HCT116 (cell line): ENCODE measurements at regions of chr18 and their contacts with region 1.

Region 1: DNA sequence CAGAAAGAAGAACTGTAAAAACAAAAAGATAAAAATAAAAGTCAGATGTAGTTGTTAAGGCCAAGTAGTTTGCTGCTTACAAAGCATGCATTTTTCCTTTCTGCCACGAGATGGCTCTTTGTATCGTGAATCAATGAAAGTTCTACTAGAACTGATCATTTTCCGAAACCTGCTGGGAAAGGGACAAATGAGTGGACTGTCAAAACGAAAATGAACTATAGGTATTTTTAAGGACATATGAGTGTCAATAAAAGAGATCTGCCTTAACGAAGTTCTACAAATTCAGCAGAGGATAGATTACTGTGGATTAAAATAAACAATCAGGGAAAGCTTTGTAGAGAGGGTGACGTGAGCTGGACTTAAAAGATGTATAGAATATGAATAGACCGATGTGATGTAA is 15.0 kb upstream of the ELOA2 start:
- DNase-seq: peak; percentile 54
- ATAC-seq: peak; percentile 71
- H3K4me3 ChIP-seq: no peak overlapping the region
- H3K27ac ChIP-seq: no peak overlapping the region
- H3K4me1 ChIP-seq: no peaks in the 10 kb centered on the region
- H3K27me3 ChIP-seq: peaks cover 56% of the 10 kb centered on the region; the same call in 1 of the 2 replicates
- CTCF ChIP-seq: peak; percentile 55 to 80 (median 63); a peak in 5 of 6 replicates
- POLR2A ChIP-seq: no peak
- RAD21 ChIP-seq: peak; percentile 78

Region 2: DNA sequence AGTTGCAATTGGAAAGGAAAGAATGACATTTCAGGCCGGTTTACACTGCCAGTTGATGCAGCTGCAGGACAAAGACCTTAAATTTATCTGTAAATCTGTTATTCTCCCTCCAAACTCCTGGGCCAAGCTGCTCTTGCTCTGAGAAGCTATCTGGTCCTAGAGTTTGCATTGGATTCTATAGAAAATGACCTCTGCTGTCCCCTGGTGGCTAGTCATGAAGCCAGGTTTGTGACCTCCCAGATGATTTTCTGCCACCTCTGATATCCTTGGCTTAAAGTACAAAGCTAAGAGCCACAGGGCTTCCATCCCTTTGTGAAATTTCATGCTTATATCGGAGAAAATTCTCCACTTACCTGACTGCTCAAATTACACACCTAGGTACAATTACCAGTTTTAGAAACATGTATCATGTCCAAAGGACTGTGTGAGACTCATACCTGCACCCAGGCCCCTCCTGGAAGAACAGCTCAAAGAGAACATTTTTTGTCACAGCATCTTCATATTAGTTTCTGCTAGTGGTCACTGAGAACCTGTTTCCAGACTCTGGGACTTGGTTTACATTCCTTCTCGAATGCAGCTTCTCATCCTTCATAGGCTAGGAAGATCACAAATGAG is 154.5 kb after region 1 on chr18:
- CTCF ChIA-PET with region 1: interaction called, 48 read pairs
- POLR2A ChIA-PET with region 1: no interaction called
- RAD21 ChIA-PET with region 1: interaction called in 1 of 2 experiments, 6 read pairs
- intact Hi-C with region 1: loop called (anchors 1 kb)
- DNase-seq: peak; percentile 29
- ATAC-seq: peak; percentile 86
- H3K4me3 ChIP-seq: no peak overlapping the region
- H3K27ac ChIP-seq: no peak overlapping the region
- H3K4me1 ChIP-seq: no peaks in the 10 kb centered on the region
- H3K27me3 ChIP-seq: peaks cover 44% of the 10 kb centered on the region
- CTCF ChIP-seq: peak; percentile 77 to 87 (median 86); a peak in 5 of 6 replicates
- POLR2A ChIP-seq: no peak
- RAD21 ChIP-seq: peak; percentile 77

Region 3: DNA sequence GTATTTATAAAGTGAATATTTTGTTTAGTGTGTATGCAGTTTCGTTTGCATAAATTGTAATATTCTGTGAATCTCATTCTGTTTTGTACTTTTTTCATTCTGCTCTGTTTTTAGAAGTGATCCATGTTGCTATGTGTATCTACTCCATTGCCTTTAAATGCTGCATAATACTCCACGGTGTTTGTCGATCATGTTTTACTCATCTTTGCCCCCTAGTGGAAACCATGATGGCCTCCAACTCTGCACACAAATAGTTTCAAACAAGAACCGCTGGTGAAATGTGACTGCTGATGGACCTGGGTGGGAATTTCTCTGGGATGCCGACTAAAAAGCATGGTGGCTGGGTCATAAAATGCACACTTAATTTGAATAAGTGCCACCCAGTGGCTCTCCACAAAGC is 233.0 kb after region 1 on chr18:
- CTCF ChIA-PET with region 1: no interaction called
- POLR2A ChIA-PET with region 1: no interaction called
- RAD21 ChIA-PET with region 1: no interaction called
- intact Hi-C with region 1: loop called (anchors 5 kb)
- DNase-seq: peak; percentile 42
- ATAC-seq: peak; percentile 96
- H3K4me3 ChIP-seq: no peak overlapping the region
- H3K27ac ChIP-seq: no peak overlapping the region
- H3K4me1 ChIP-seq: no peaks in the 10 kb centered on the region
- H3K27me3 ChIP-seq: peaks cover 57% of the 10 kb centered on the region
- CTCF ChIP-seq: peak; percentile 38 to 81 (median 72); a peak in 5 of 6 replicates
- POLR2A ChIP-seq: no peak
- RAD21 ChIP-seq: peak; percentile 44; the same call in 1 of the 2 replicates